ENCODE measurements at regions of chr16 and their contacts with region 1.

Region 1: DNA sequence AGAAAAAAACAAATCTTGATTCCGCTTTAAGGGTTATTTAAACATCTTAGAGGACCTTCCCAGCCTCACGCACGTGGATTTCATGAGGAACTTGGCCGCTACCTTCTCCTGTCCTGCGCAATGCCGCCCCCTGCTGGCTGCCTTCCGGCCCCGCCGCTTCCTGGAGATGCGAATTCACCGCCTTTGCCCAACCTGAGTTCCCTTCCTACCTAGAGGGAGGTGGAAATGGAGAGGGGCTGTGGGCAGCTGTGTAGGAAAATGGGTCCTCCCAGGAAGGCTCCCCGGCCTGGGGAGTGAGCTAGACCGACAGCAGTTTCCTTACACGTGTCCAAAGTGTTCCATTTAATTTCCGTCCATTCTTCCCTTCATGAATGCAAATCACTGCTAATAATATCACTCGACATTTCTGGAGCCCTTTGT is 1.0 kb upstream of the ABCC12 start:
- DNase-seq: peak; percentile 67 to 95
- H3K4me3 ChIP-seq: no peak overlapping the region
- CTCF ChIP-seq: peak in 1 of 3 donors; percentile 53
- POLR2A ChIP-seq: no peak

Region 2: GRCh38 chr16:47037746-47038458 is 1118.9 kb before region 1 on chr16:
- intact Hi-C with region 1: loop called (anchors 10 kb)
- DNase-seq: peak; percentile 79 to 98
- H3K4me3 ChIP-seq: peak overlapping the region; percentile 40
- CTCF ChIP-seq: no peak
- POLR2A ChIP-seq: no peak

Region 3: DNA sequence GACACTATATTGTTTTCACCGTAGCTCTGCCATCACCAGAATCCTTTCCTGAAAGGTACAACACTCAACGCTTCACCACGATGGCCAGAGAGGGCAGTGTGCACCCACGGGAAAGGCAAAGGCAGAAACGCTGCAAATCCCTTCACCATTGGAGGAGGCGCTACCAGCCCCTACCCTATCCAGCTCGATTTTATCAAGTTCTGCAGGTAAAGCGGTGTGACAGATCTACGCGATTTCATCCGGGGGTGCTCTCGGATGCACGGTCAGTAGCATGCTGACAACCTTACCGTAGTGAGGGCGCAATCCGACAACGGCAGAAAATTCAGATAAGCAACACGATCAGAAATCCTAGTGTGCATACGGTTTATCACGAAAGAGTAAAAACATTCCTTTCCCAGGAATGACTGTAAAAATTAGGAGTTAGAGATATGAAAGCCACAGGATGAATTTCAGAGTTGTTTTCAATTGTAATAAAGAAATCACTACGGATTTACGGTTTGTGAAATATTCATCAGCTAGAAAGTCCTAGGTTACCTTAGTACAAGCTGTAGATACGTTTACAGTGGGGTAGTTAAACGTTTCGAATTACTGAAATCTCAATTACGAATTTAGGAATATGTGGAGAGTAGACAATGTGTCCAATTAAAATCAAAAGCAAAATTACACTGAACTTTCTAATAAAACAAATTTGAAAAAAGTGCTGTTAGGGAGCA is 1014.9 kb before region 1 on chr16:
- intact Hi-C with region 1: loop called (anchors 5 kb)
- DNase-seq: peak; percentile 73 to 94
- H3K4me3 ChIP-seq: no peak overlapping the region
- CTCF ChIP-seq: peak in 1 of 3 donors; percentile 50
- POLR2A ChIP-seq: no peak

Region 4: DNA sequence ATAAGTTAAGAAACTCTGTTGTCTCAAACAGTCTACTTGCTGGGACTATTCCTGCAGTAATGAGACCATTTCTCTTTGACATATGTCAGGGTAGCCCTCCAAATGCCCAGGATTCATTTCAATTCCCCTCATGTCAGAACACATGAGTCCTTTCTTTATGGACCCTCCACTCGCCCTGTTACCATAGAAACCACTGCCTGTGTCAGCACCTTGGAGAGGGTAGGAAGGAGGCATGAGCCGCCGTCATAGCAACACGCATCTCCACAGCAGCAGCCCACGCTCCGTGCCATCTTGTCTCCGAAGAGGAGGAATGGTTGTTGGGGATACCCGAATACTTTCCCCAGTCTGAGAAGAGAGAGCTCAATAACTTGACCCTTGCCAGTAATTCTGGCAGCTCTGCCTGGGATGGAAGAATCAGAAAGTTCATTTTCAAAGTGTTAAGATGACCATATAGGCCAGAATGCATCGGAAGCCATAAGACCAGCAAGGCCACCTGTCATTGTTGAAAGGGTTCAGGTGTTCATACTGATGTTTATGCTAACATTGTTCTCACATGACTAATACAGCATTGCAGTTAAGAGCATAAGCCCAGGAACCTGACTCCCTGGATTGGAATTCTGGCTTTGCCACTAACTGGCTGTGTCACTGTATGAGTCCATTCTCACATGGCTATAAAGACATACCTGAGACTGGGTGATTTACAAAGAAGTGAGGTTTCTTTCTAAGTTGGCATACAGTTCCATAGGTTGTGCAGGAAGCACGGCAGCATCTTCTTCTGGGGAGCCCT is 142.3 kb before region 1 on chr16:
- intact Hi-C with region 1: no loop called
- DNase-seq: no peak
- H3K4me3 ChIP-seq: no peak overlapping the region
- CTCF ChIP-seq: no peak
- POLR2A ChIP-seq: no peak